Adrenal gland (tissue), 19 donors: ENCODE measurements at regions of chr16 and their contacts with region 1.

Region 1: DNA sequence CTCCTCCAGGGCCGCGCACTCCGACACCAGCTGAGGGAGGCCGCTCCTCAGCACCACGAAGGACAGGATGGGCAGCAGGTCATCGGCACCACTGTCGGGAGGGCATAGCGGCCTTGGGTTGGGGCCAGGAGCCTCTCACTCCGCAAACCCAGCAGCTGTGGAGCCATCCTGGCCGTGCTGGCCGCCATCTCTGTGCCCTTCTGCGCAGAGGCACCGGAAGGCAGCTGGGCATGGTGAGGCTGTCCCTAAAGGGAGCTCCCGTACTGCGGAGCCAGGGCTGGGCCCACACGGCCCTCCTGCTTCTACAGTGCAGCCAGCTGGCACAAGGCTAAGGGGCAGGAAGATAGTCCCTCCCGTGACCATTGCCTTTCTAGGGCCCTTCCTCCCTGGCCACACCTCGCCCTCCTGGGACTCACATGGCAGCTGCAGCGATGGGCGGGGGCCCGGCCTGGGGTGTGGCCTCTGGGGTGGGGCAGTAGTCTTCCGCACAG is 7.0 kb upstream of the SPATA2L start:
- DNase-seq: no peak
- H3K4me3 ChIP-seq: no peak overlapping the region
- H3K27ac ChIP-seq: no peak overlapping the region
- H3K4me1 ChIP-seq: peaks cover 6 to 11% of the 10 kb centered on the region in 2 donors
- H3K27me3 ChIP-seq: no peaks in the 10 kb centered on the region
- CTCF ChIP-seq: no peak
- POLR2A ChIP-seq: no peak

Region 2: GRCh38 chr16:89791278-89791995 is 83.0 kb after region 1 on chr16:
- intact Hi-C with region 1: loop called (anchors 5 kb)
- DNase-seq: no peak
- H3K4me3 ChIP-seq: no peak overlapping the region
- H3K27ac ChIP-seq: no peak overlapping the region
- H3K4me1 ChIP-seq: no peaks in the 10 kb centered on the region
- H3K27me3 ChIP-seq: no peaks in the 10 kb centered on the region
- CTCF ChIP-seq: no peak
- POLR2A ChIP-seq: no peak

Region 3: DNA sequence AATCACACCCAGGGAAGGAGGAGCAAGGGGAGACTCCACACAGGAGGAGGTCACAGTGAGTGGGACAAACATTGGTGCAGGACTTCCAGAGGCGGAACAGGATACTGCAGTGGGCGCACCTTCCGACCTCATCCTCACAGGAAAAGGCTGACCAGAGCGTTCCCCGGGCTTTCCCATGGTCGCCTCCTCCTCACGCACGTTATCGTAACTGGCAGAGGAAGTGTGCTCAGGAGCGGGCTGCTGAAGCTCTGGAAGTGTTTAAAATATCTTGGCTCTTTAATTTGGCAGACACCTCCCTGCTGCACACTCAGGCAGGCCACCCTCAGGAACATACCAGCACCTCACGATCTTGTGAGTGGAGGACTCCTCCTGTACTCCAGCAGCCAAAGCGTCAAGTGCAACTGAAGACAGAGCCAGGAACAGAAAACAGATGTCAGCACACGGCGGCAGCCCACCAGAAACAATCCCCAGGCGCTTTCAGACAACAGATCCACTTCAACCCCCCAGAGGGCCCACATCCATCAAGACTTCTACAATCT is 90.4 kb after region 1 on chr16:
- intact Hi-C with region 1: loop called (anchors 5 kb)
- DNase-seq: peak in 3 of 7 donors; percentile 23 to 58 (median 44)
- H3K4me3 ChIP-seq: no peak overlapping the region
- H3K27ac ChIP-seq: peak overlapping the region in 1 of 5 donors; percentile 44
- H3K4me1 ChIP-seq: no peaks in the 10 kb centered on the region
- H3K27me3 ChIP-seq: no peaks in the 10 kb centered on the region
- CTCF ChIP-seq: no peak
- POLR2A ChIP-seq: no peak